Activated naive CD4-positive, alpha-beta T cell treated with anti-CD3 and anti-CD28 coated beads for 36 hours (primary cell): ENCODE measurements at regions of chr10 and their contacts with region 1.

Region 1: DNA sequence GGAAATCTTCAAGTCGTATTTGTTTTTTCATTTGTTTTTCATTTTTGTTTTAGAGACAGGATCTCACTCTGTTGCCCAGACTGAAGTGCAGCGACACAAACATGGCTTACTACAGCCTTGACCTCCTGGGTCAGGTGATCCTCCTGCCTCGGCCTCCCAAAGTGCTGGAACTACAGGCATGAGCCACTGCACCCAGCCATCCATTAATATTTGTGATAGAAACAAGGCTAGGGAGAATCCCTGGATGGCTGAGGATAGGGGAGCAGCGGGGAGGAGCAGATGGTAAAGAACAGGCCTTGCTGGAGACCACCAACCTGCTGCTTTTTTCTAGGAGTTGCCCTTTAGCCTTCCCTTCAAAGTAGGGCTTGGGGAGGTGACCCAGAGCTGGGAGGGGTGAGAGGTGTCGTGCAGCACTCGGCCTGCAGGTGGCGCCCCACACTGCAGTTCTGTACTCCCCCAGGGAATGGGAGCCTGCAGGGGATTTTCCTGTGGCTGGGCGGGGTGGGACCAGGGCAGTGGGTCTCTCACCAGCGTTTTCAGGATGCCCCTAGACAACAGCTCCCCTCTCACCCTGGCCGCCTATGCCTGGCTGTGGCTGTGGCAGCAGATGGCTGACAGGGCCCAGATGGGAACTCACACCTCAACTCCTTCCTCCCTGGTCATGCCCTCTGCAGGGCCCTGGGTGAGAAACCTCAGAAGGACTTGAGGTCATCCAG is 12.6 kb upstream of the CDH23 start:
- DNase-seq: peak; percentile 84
- H3K4me3 Mint-ChIP-seq: no peak overlapping the region
- H3K27ac Mint-ChIP-seq: no peak overlapping the region
- H3K4me1 Mint-ChIP-seq: no peaks in the 10 kb centered on the region
- H3K27me3 Mint-ChIP-seq: no peaks in the 10 kb centered on the region

Region 2: DNA sequence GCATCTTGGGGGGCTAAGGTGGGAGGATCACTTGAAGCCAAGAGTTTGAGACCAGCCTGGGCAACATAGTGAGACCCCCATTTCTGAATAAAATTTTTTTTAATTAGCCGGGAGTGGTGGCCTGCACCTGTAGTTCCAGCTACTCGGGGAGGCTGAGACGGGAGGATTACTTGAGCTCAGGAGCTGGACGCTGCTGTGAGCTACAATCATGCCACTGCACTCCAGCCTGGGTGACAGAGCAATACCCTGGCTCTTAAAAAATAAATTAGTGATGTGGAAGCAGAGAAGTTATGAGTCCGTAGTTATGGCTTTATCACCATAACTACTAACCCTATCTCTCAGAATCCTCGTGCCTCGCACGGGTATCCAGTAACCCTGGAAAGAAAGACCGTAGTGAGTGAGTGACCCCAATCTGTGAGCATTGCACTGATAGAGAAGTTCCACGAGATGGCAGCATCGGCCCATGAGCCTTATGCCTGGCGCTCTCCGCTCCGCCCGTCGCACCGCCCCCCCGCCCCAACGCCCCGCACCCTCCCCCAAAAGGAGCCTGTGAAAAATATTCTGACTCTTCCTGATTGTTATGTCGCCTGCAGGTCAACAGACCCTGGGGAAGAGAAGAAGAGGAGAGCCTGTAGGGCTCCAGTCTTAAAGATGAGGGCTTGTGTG is 70.0 kb before region 1 on chr10:
- CTCF ChIA-PET with region 1: interaction called, 14 read pairs
- intact Hi-C with region 1: loop called (anchors 2 kb)
- DNase-seq: peak; percentile 62
- H3K4me3 Mint-ChIP-seq: no peak overlapping the region
- H3K27ac Mint-ChIP-seq: no peak overlapping the region
- H3K4me1 Mint-ChIP-seq: peaks cover 18% of the 10 kb centered on the region
- H3K27me3 Mint-ChIP-seq: peaks cover 5% of the 10 kb centered on the region

Region 3: GRCh38 chr10:71319042-71319799 is 64.9 kb before region 1 on chr10 and contains the start of gene SLC29A3:
- CTCF ChIA-PET with region 1: interaction called, 14 read pairs
- intact Hi-C with region 1: loop called (anchors 2 kb)
- DNase-seq: peak; percentile 92
- H3K4me3 Mint-ChIP-seq: peak within 1 kb of the TSS; percentile 93
- H3K27ac Mint-ChIP-seq: peak within 1 kb of the TSS; percentile 18
- H3K4me1 Mint-ChIP-seq: peaks cover 35% of the 10 kb centered on the region
- H3K27me3 Mint-ChIP-seq: no peaks in the 10 kb centered on the region
- total RNA-seq, gene SLC29A3: 1.2 to 1.5 TPM

Region 4: DNA sequence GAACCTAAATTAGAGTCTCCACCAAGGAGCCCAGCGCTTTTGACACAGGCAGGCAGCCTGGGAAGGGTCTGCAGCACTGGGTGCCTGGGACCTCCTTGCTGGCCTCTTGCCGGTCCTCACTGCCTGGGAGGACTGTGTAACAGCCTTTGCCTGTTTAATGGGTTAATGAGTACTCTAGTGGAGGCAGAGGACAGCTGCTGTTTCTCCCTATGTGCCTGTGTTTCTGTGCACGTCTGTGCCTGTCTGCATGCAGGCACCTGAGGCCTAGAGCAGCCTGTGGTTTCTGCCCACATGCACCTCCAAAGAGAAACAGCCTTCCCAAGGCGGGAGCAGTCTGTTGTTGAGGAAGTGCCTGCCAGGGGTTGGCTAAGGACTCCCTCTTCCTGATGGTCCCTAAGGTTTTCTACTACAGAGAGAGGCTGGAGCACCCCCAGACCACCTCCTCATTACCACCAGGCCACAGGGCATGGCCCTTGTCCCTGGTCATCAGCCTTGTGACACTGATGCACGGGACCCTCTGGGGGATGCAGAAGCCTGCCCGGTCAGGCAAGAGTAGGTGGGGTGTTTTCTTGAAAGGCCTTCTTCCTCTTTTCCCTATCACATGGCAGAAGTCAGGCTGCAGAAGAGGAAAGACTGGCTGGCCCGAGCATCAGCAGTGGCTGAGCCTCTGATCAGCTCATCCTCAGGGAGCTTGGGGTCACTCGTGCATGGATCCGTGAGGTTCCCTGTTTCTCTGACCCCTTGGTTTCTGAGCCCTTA is 50.8 kb before region 1 on chr10:
- CTCF ChIA-PET with region 1: no interaction called
- intact Hi-C with region 1: no loop called
- DNase-seq: no peak
- H3K4me3 Mint-ChIP-seq: no peak overlapping the region
- H3K27ac Mint-ChIP-seq: no peak overlapping the region
- H3K4me1 Mint-ChIP-seq: no peaks in the 10 kb centered on the region
- H3K27me3 Mint-ChIP-seq: no peaks in the 10 kb centered on the region

Region 5: GRCh38 chr10:71396084-71396720 is 12.1 kb after region 1 on chr10:
- CTCF ChIA-PET with region 1: interaction called, 10 read pairs
- intact Hi-C with region 1: no loop called
- DNase-seq: peak; percentile 62
- H3K4me3 Mint-ChIP-seq: peak overlapping the region; percentile 45
- H3K27ac Mint-ChIP-seq: no peak overlapping the region
- H3K4me1 Mint-ChIP-seq: peaks cover 2% of the 10 kb centered on the region
- H3K27me3 Mint-ChIP-seq: peaks cover 58% of the 10 kb centered on the region

Region 6: GRCh38 chr10:71501402-71501801 is 117.3 kb after region 1 on chr10:
- CTCF ChIA-PET with region 1: no interaction called
- intact Hi-C with region 1: no loop called
- DNase-seq: no peak
- H3K4me3 Mint-ChIP-seq: no peak overlapping the region
- H3K27ac Mint-ChIP-seq: no peak overlapping the region
- H3K4me1 Mint-ChIP-seq: no peaks in the 10 kb centered on the region
- H3K27me3 Mint-ChIP-seq: no peaks in the 10 kb centered on the region

Region 7: GRCh38 chr10:71569775-71570588 is 185.9 kb after region 1 on chr10:
- CTCF ChIA-PET with region 1: interaction called, 53 read pairs
- intact Hi-C with region 1: loop called (anchors 1 kb)
- DNase-seq: peak; percentile 91
- H3K4me3 Mint-ChIP-seq: no peak overlapping the region
- H3K27ac Mint-ChIP-seq: no peak overlapping the region
- H3K4me1 Mint-ChIP-seq: no peaks in the 10 kb centered on the region
- H3K27me3 Mint-ChIP-seq: no peaks in the 10 kb centered on the region

Region 8: GRCh38 chr10:71608819-71609768 is 225.0 kb after region 1 on chr10:
- CTCF ChIA-PET with region 1: interaction called, 7 read pairs
- intact Hi-C with region 1: loop called (anchors 2 kb)
- DNase-seq: peak; percentile 84
- H3K4me3 Mint-ChIP-seq: no peak overlapping the region
- H3K27ac Mint-ChIP-seq: no peak overlapping the region
- H3K4me1 Mint-ChIP-seq: no peaks in the 10 kb centered on the region
- H3K27me3 Mint-ChIP-seq: no peaks in the 10 kb centered on the region

Region 9: DNA sequence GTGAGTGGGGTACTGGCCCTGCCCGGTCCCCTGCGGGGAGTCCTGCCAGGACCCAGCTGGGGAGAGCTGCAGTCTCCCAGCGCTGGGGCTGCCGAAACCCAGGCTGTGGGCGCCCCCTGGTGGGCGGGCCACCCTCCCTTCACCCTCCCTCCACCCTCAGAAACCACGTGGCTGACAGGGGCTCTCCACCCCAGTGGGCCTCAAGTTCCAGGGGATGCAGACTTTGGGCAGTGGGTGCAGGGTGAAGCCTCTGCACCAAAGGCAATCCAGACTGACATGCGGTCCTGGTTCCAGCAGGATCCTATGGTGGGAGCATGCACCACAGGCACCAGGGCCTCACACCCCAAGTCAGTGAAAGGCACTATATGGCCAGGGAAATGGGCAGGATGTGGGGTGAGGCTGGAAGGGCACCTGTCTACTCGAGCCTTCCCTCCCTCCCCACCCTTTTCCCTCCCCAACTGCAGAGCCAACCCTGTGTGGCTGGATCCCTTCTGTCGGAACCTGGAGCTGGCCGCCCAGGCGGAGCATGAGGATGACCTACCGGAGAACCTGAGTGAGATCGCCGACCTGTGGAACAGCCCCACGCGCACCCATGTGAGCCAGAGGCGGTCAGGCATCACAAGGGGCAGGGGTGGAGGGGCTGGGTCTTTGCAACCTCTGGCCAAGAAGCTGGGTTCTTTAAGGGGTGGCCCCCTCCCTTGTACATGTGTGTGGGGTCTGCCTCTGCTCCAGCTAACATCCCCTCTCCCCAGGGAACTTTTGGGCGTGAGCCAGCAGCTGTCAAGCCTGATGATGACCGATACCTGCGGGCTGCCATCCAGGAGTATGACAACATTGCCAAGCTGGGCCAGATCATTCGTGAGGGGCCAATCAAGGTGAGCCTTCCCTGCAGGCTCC is 428.1 kb after region 1 on chr10:
- CTCF ChIA-PET with region 1: interaction called, 4 read pairs
- intact Hi-C with region 1: loop called (anchors 1 kb)
- DNase-seq: peak; percentile 83
- H3K4me3 Mint-ChIP-seq: no peak overlapping the region
- H3K27ac Mint-ChIP-seq: no peak overlapping the region
- H3K4me1 Mint-ChIP-seq: peaks cover 2% of the 10 kb centered on the region
- H3K27me3 Mint-ChIP-seq: no peaks in the 10 kb centered on the region

Region 10: DNA sequence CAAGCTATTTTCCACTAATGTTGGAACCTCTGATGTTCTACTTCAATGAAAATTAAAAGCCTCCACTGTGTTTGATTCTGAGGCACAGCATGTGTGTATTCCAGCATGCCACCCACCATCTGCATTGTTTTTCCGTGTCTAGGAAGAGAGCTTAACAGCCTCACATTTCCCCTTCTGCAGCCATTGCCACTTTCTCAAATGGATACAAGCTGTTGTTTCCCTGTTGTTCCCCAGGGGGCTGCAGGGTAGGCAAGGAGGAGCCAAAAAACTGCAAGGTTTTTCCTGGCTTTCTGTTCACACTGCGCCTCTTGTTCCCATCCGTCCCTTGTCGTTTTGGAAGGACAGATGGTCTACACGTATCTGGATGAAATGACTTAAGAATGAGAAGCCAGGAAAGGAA is 1042.9 kb after region 1 on chr10:
- CTCF ChIA-PET with region 1: no interaction called
- intact Hi-C with region 1: no loop called
- DNase-seq: no peak
- H3K4me3 Mint-ChIP-seq: no peak overlapping the region
- H3K27ac Mint-ChIP-seq: no peak overlapping the region
- H3K4me1 Mint-ChIP-seq: no peaks in the 10 kb centered on the region
- H3K27me3 Mint-ChIP-seq: no peaks in the 10 kb centered on the region